K562 (cell line): ENCODE measurements at regions of chr7 and their contacts with region 1.

Region 1: DNA sequence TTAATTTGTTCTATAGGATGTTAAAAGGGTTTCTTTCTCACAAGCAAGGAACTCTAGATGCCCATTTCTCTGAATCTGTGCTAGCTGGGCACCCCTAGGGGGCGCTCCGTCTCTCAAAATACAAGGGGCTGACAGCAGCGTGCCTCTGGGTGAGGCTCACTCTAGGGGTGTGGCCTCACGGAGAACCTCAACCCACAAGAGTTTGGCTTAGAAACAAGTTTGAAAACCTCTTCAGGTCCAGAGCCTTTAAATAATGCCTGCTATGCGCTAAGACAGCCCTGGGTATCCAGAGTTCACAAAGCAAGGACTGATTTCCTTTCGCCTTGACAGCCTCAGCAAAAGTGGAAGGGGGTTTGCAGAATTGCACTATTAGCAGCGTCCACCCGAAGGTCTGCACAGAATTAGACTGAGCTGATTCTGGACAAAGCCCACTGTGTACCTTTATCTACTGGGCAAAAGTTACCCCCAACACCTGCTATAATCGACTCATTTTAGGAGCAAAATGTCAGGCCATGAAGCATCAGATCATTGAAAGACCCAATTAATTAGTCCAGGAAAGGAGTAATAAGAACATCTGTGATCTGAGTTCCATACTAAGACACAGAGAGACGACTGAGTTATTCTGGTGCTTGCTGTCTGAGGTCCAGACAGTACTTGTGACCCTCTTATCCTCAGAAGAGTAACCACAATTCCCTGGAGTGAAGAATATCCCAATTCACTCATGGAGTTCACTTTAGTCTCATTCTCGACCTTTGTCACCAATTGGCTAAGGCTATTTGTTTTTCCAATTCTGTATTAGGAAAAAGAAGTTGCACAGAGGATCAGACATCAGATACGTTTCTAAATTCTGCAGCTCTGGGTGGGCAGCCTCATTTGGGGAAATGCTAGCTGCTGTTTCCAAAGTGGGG is 574 bp upstream of the CPED1 start:
- DNase-seq: peak; percentile 94 to 100 (median 94)
- ATAC-seq: peak; percentile 73
- H3K4me3 ChIP-seq: peak overlapping the region; percentile 63
- H3K27ac ChIP-seq: peak overlapping the region; percentile 78
- H3K4me1 ChIP-seq: peaks cover 9 to 32% of the 10 kb centered on the region in 2 experiments
- H3K27me3 ChIP-seq: no peaks in the 10 kb centered on the region
- CTCF ChIP-seq: peak; percentile 97 to 100 (median 99)
- EP300 ChIP-seq: no peak; the same call in 1 of the 2 replicates
- POLR2A ChIP-seq: peak; percentile 50; the same call in 1 of the 2 replicates
- RAD21 ChIP-seq: peak; percentile 98 to 99

Region 2: GRCh38 chr7:119943942-119944600 is 1043.9 kb before region 1 on chr7:
- CTCF ChIA-PET with region 1: no interaction called
- POLR2A ChIA-PET with region 1: no interaction called
- in situ Hi-C with region 1: no loop called
- intact Hi-C with region 1: loop called (anchors 5 kb)
- DNase-seq: peak; percentile 29 to 77 (median 39)
- ATAC-seq: peak; percentile 57
- H3K4me3 ChIP-seq: no peak overlapping the region
- H3K27ac ChIP-seq: peak overlapping the region; percentile 33; the same call in 2 of the 3 replicates
- H3K4me1 ChIP-seq: peaks cover 0 to 8% of the 10 kb centered on the region in 2 experiments; a peak in 2 of 5 replicates
- H3K27me3 ChIP-seq: no peaks in the 10 kb centered on the region
- CTCF ChIP-seq: no peak
- EP300 ChIP-seq: peak; percentile 20; the same call in 1 of the 2 replicates
- POLR2A ChIP-seq: no peak
- RAD21 ChIP-seq: no peak

Region 3: DNA sequence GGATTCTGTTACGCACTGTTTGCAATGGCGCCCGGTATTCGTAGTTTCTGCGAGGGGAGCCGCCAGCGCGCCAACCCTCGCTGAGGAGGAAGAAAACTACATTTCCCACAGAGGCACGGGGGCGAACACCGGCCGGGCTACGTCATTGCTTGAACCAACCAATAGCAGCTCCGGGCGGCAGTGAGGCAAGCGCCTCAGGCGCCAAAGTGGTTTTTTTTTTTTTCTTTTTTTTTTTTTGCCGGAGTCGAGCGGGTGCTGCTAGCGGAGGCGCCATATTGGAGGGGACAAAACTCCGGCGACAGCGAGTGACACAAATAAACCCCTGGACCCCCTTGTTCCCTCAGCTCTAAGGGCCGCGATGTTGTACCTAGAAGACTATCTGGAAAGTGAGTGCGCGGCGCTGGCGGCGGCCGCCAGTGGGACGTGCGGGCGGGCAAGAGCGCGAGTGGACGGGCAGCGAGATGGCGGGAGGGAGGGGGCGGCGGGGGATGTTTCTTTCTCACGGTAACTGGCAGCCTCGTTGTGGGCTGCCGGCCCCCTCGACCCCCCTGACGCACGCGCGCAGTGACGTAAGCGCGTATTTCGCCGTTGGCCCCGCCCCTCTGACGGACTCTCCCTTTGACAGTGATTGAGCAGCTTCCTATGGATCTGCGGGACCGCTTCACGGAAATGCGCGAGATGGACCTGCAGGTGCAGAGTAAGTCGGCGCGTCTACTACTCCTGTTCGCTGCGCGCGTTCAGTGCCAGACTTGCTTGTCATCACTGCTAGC is 37.2 kb before region 1 on chr7 and contains the start of gene ING3:
- CTCF ChIA-PET with region 1: no interaction called
- POLR2A ChIA-PET with region 1: interaction called, 5 read pairs
- in situ Hi-C with region 1: no loop called
- intact Hi-C with region 1: loop called (anchors 1 kb)
- DNase-seq: peak; percentile 97 to 100 (median 98)
- ATAC-seq: peak; percentile 91
- H3K4me3 ChIP-seq: peak within 1 kb of the TSS; percentile 55
- H3K27ac ChIP-seq: peak within 1 kb of the TSS; percentile 95
- H3K4me1 ChIP-seq: peaks cover 0 to 5% of the 10 kb centered on the region in 2 experiments; a peak in 2 of 5 replicates
- H3K27me3 ChIP-seq: no peaks in the 10 kb centered on the region
- CTCF ChIP-seq: no peak
- EP300 ChIP-seq: peak; percentile 65
- POLR2A ChIP-seq: peak; percentile 95
- RAD21 ChIP-seq: no peak; a peak in 1 of 4 replicates
- polyA plus RNA-seq, gene ING3: 216 to 233 TPM

Region 4: GRCh38 chr7:121081327-121081936 is 93.5 kb after region 1 on chr7:
- CTCF ChIA-PET with region 1: interaction called, 129 read pairs
- POLR2A ChIA-PET with region 1: interaction called, 46 read pairs
- in situ Hi-C with region 1: no loop called
- intact Hi-C with region 1: loop called (anchors 1 kb)
- DNase-seq: peak; percentile 44 to 85 (median 62)
- ATAC-seq: peak; percentile 24
- H3K4me3 ChIP-seq: peak overlapping the region; percentile 54
- H3K27ac ChIP-seq: peak overlapping the region; percentile 2; the same call in 1 of the 3 replicates
- H3K4me1 ChIP-seq: peaks cover 3 to 54% of the 10 kb centered on the region in 2 experiments
- H3K27me3 ChIP-seq: no peaks in the 10 kb centered on the region
- CTCF ChIP-seq: peak; percentile 58 to 84 (median 78); a peak in 5 of 6 replicates
- EP300 ChIP-seq: no peak; the same call in 1 of the 2 replicates
- POLR2A ChIP-seq: peak; percentile 88
- RAD21 ChIP-seq: peak; percentile 89 to 91

Region 5: DNA sequence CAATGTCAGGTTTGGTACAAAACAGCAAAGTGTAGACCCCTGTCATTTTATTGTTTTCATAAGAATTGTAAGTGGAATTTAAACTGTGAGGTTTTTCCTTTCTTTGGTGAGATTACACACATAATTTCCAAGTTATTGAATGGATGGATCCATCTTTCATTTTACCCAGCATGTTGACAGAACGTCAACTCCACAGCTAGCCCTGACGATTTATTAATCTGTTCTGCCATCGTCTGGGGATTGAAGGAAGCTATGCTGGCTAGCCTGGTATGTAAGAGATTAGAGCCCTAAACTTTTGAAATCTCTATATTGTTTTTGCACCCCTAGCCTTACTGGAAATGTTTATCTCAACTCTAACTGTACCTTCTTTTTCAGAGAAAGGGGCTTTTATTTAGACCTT is 349.5 kb after region 1 on chr7:
- CTCF ChIA-PET with region 1: no interaction called
- POLR2A ChIA-PET with region 1: interaction called, 3 read pairs
- in situ Hi-C with region 1: no loop called
- intact Hi-C with region 1: loop called (anchors 5 kb)
- DNase-seq: peak in 1 of 4 experiments; percentile 47
- ATAC-seq: peak; percentile 89
- H3K4me3 ChIP-seq: no peak overlapping the region
- H3K27ac ChIP-seq: no peak overlapping the region
- H3K4me1 ChIP-seq: no peaks in the 10 kb centered on the region
- H3K27me3 ChIP-seq: peaks cover 0 to 15% of the 10 kb centered on the region in 2 experiments; a peak in 2 of 5 replicates
- CTCF ChIP-seq: peak; percentile 43 to 73 (median 68); a peak in 5 of 6 replicates
- EP300 ChIP-seq: no peak
- POLR2A ChIP-seq: no peak
- RAD21 ChIP-seq: peak; percentile 77 to 90

Region 6: GRCh38 chr7:121547544-121548092 is 559.7 kb after region 1 on chr7:
- CTCF ChIA-PET with region 1: no interaction called
- POLR2A ChIA-PET with region 1: no interaction called
- in situ Hi-C with region 1: no loop called
- intact Hi-C with region 1: loop called (anchors 10 kb)
- DNase-seq: peak; percentile 62 to 77 (median 72)
- ATAC-seq: peak; percentile 95
- H3K4me3 ChIP-seq: no peak overlapping the region
- H3K27ac ChIP-seq: no peak overlapping the region
- H3K4me1 ChIP-seq: no peaks in the 10 kb centered on the region
- H3K27me3 ChIP-seq: no peaks in the 10 kb centered on the region
- CTCF ChIP-seq: peak; percentile 70 to 95 (median 77)
- EP300 ChIP-seq: no peak
- POLR2A ChIP-seq: no peak
- RAD21 ChIP-seq: peak; percentile 99 to 100